CD14-positive monocyte (primary cell): ENCODE measurements at regions of chr21 and their contacts with region 1.

Region 1: DNA sequence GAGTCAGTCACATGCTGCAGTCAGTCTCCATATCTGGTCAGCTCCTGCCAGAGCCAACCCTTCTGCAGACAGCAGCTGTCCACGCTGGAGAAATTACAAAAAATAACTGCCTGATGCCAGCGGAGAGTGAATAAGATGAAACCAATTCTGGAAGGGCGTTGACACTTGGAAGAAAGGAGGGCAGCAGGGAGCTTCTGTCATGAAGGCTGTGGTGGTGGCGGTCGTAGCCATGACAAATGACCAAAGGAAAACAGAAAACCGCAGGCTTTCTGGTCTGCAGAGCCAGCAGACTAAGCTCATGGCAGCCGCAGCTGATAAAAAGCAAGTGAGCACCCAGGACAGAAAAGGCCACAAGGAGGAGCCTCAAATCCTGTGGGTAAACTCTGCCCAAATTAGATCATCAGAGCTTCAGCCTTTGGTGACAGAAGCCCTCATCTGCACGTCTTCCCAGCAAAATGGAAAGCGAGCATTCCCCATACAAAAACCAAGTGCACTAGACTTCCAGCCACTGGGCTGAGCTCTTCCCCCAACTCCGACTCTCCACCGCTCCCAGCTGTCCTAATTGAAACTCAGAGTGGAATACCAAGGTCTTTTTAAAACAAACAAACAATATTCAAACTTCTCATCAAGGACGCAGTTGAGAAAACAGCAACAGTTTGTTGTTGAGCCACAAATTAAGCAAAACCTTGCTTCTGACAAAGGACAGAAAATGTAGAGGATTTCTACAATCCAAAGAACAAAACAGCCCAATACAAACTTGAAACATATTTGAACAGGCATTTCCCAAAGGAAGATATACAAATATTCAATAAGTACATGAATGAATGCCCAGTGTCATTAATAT is 28.7 kb downstream of the RSPH1 start:
- DNase-seq: peak in 2 of 3 donors; percentile 13 to 47
- H3K4me3 ChIP-seq: no peak overlapping the region
- H3K4me3 Mint-ChIP-seq: no peak overlapping the region
- H3K27ac ChIP-seq: no peak overlapping the region
- H3K27ac Mint-ChIP-seq: peak overlapping the region in 3 of 7 donors; percentile 40 to 70 (median 60)
- H3K4me1 ChIP-seq: peaks cover 23 to 28% of the 10 kb centered on the region in 2 donors
- H3K4me1 Mint-ChIP-seq: peaks cover 32% of the 10 kb centered on the region
- H3K27me3 ChIP-seq: no peaks in the 10 kb centered on the region
- H3K27me3 Mint-ChIP-seq: peaks cover 1 to 11% (median 1%) of the 10 kb centered on the region in 3 donors
- CTCF ChIP-seq: peak; percentile 21

Region 2: DNA sequence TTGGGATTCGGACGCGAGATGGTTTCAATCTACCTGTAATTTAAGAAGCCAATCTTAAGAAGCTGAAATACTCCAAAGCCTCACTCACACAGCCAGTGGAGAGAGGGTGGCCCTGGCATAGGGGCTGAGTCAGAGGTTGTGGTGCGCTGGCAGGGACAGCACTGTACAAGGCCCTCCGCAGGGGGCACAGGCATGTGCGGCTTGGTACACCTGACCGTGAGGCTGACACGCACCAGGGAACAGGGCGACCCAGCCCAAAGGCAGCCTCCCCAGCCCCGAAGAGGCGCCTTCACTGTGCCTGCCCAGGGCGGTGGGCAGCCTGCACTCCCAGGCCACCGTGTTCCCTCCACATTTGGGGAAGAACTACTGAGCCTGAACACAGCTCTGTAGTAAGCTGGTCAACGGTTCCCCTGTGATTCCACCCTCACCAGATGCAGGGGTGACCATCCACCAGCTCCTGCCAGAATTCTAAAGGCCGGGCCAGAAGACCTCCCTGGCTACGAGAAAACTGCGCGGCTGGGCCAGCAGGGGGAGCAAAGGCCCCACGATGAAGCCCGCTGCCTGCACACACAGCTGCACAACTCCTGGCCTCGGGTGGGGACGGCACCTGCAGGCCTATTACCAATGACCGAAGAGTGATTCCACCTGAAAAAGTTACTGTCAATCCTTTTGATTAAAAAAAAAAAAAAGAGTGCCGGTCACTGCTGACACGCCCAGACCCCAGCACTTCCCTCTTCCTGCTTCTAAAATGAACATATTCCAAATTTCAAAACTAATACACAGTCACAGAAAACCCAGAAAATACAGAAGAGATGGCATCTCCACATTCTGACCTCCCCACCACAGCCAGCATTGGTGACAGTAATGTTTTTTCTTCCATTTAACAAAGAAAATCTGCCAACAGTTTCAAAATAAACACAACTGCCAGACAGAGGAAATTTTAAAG is 650.9 kb before region 1 on chr21:
- intact Hi-C with region 1: loop called in 1 of 2 experiments (anchors 10 kb)
- DNase-seq: peak; percentile 15 to 46 (median 31)
- H3K4me3 ChIP-seq: peak overlapping the region in 1 of 3 experiments; percentile 28
- H3K4me3 Mint-ChIP-seq: peak overlapping the region in 1 of 2 donors; percentile 71
- H3K27ac ChIP-seq: no peak overlapping the region
- H3K27ac Mint-ChIP-seq: peak overlapping the region in 5 of 7 donors; percentile 6 to 68 (median 33)
- H3K4me1 ChIP-seq: peaks cover 4 to 6% of the 10 kb centered on the region in 2 donors
- H3K4me1 Mint-ChIP-seq: peaks cover 7% of the 10 kb centered on the region
- H3K27me3 ChIP-seq: no peaks in the 10 kb centered on the region
- H3K27me3 Mint-ChIP-seq: no peaks in the 10 kb centered on the region
- CTCF ChIP-seq: peak; percentile 84